Panc1 (cell line): ENCODE measurements at regions of chr12 and their contacts with region 1.

Region 1: GRCh38 chr12:54214553-54215406 is 26.0 kb upstream of the SMUG1 start:
- DNase-seq: peak; percentile 64
- ATAC-seq: peak; percentile 86
- H3K4me3 ChIP-seq: peak overlapping the region; percentile 20 to 60; a peak in 3 of 4 replicates
- H3K27ac ChIP-seq: no peak overlapping the region; the same call in 1 of the 2 replicates
- H3K4me1 ChIP-seq: peaks cover 12% of the 10 kb centered on the region; the same call in 1 of the 2 replicates
- H3K27me3 ChIP-seq: no peaks in the 10 kb centered on the region
- CTCF ChIP-seq: peak; percentile 100

Region 2: DNA sequence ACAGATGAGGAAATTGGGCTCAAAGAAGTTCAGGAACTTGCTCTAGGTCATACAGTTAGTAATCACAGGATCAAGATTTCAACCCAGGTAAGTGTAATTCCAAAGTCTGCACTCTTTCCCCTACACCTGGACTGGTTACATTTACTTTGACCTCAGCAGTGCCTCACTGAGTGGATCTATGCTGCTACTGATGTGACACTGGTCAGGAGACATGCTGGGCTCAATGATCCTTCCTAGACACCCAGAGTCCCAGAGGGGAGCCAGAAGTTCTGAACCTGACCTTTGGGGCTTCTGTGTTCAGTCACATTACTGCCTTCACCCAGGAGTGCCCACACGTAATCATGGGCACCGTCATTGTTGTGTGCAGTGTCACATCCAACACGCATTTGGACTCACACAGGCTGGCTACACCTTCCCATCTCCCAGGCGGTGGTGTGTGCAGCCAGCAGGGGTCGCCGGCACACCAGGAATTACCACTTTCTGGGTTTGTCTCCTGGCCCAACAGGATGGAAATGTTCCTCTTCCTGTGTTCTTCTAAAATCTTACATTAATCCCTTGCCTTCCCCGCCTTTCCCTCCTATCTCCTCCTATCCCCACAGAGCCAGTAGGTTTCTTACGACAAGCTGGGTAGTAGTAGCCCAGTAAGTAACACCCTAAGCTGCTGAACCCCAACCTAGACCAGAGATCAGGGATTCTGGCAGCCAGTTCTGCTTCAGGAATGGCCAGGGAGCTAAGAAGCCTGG is 513.1 kb before region 1 on chr12:
- CTCF ChIA-PET with region 1: no interaction called
- POLR2A ChIA-PET with region 1: no interaction called
- in situ Hi-C with region 1: no loop called
- intact Hi-C with region 1: loop called (anchors 5 kb)
- DNase-seq: peak; percentile 61
- ATAC-seq: peak; percentile 99
- H3K4me3 ChIP-seq: no peak overlapping the region
- H3K27ac ChIP-seq: no peak overlapping the region; the same call in 1 of the 2 replicates
- H3K4me1 ChIP-seq: no peaks in the 10 kb centered on the region
- H3K27me3 ChIP-seq: peaks cover 10% of the 10 kb centered on the region
- CTCF ChIP-seq: peak; percentile 97

Region 3: DNA sequence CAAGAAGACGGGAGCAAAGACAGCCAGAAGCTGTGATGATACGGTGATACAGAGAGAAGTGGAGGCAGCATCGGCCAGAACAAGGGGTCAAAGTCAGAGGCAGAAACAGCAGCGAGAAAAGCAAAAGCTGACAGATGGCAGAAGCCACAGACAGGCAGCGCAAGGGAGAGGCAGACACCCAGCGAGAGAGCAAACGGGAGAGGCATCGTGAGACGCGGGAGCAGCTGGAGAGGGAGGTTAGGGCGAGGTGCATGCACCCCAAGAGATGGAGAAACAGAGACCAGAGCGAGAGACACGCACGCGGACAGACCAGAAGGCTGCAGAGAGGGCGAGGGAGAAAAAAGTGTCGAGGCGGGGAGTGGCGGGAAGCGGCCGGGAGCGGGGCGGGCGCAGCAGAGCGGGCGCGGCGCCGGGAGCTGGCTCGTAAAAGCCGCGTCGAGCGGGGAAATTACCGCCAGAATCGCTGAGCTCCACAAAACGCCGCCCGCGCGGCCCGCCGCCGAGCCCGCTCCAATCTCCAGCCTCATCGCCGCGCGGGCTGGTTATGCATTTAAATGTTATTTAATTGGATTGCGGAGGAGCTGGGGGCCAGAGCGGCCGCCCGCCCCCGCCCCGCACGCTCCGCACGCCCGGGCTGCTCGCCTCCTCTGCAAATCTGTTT is 41.6 kb before region 1 on chr12:
- CTCF ChIA-PET with region 1: no interaction called
- POLR2A ChIA-PET with region 1: interaction called, 15 read pairs
- in situ Hi-C with region 1: no loop called
- intact Hi-C with region 1: no loop called
- DNase-seq: no peak
- ATAC-seq: peak; percentile 69
- H3K4me3 ChIP-seq: peak overlapping the region; percentile 33 to 40
- H3K27ac ChIP-seq: no peak overlapping the region
- H3K4me1 ChIP-seq: peaks cover 3% of the 10 kb centered on the region; the same call in 1 of the 2 replicates
- H3K27me3 ChIP-seq: peaks cover 13% of the 10 kb centered on the region
- CTCF ChIP-seq: no peak

Region 4: GRCh38 chr12:54798651-54799050 is 583.9 kb after region 1 on chr12:
- CTCF ChIA-PET with region 1: no interaction called
- POLR2A ChIA-PET with region 1: no interaction called
- in situ Hi-C with region 1: no loop called
- intact Hi-C with region 1: no loop called
- DNase-seq: no peak
- ATAC-seq: no peak
- H3K4me3 ChIP-seq: no peak overlapping the region
- H3K27ac ChIP-seq: no peak overlapping the region
- H3K4me1 ChIP-seq: no peaks in the 10 kb centered on the region
- H3K27me3 ChIP-seq: no peaks in the 10 kb centered on the region; the same call in 1 of the 2 replicates
- CTCF ChIP-seq: no peak